A549 (cell line): ENCODE measurements at regions of chr9 and their contacts with region 1.

Region 1: GRCh38 chr9:129783516-129784361 is 19.2 kb upstream of the TOR1B start:
- DNase-seq: peak; percentile 78 to 92
- ATAC-seq: peak; percentile 95 to 98
- H3K4me3 ChIP-seq: no peak overlapping the region
- H3K27ac ChIP-seq: peak overlapping the region; percentile 51 to 73
- H3K4me1 ChIP-seq: peaks cover 9% of the 10 kb centered on the region; the same call in 1 of the 3 replicates
- CTCF ChIP-seq: peak; percentile 95
- EP300 ChIP-seq: no peak
- POLR2A ChIP-seq: no peak
- RAD21 ChIP-seq: peak; percentile 98 to 99

Region 2: DNA sequence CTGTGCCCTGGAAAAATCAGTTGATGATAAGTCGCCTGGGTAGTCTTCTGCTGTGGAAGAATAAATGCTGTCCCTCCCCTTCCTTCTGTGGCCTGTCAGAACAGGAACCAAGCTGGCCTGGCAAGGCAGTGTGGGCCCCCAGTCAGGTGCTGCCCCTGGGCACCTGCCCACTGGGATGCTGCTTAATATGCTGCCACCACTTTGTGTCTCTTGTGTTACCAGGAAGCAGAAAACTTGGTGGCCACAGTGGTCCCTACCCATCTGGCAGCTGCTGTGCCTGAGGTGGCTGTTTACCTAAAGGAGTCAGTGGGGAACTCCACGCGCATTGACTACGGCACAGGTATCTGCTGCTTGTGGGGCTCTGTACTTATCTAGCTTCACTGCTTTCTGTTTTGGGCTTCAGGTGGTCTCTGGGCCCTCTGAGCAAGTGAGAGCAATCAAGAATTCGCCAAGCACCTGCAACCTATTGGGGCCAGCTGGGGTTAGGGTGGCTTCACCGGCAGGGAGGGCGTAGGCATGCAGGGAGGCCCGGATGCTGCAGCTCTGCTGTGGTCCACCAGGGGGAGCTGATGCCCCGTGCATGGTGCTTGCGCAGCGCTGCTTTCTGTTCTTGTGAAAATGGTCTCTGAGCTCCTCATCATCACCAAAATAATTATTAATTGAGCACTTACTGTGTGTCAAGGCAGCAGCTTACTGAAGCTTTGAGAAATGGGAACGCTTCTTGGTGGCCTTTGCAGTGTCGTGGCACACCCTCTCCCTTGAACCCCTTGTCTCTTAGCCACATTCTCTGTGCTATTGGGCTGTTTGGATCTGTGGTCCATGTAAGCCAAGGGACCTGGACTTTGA is 652.2 kb before region 1 on chr9:
- CTCF ChIA-PET with region 1: interaction called, 11 read pairs
- POLR2A ChIA-PET with region 1: no interaction called
- DNase-seq: peak; percentile 72 to 93
- ATAC-seq: peak; percentile 93 to 96
- H3K4me3 ChIP-seq: no peak overlapping the region
- H3K27ac ChIP-seq: peak overlapping the region; percentile 30 to 63; a peak in 4 of 6 replicates
- H3K4me1 ChIP-seq: peaks cover 7% of the 10 kb centered on the region; the same call in 1 of the 3 replicates
- CTCF ChIP-seq: peak; percentile 94
- EP300 ChIP-seq: no peak
- POLR2A ChIP-seq: no peak
- RAD21 ChIP-seq: peak; percentile 93 to 95

Region 3: DNA sequence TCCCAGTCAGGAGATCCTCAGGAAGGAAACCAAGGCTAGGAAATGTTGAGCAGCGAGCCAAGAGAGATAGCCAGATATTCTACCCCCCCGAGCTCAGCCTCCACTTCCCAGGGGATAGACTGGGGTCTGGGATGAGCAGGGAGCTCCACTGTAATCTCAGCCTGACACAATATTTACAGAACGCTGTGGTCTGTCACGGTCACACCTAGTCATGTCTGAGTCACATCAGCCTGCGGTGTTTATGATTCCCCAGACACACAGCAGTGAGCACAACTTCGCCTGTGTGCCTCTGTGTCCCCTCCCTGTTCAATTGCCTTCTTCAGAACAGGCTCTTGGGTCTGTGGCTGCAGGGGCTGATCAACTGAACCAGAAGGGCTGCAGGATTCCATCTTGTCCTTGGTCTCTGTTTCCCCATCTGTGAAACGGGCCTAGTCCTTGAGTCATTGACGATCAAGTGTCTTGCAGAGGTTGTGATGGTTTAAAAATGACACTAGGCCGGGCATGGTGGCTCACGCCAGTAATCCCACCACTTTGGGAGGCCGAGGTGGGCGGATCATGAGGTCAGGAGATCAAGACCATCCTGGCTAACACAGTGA is 126.8 kb before region 1 on chr9:
- CTCF ChIA-PET with region 1: interaction called, 12 read pairs
- POLR2A ChIA-PET with region 1: no interaction called
- DNase-seq: peak; percentile 57 to 83
- ATAC-seq: peak; percentile 89 to 92
- H3K4me3 ChIP-seq: no peak overlapping the region
- H3K27ac ChIP-seq: peak overlapping the region; percentile 40 to 47; a peak in 3 of 6 replicates
- H3K4me1 ChIP-seq: peaks cover 17% of the 10 kb centered on the region
- CTCF ChIP-seq: no peak
- EP300 ChIP-seq: no peak
- POLR2A ChIP-seq: no peak
- RAD21 ChIP-seq: no peak

Region 4: GRCh38 chr9:129667850-129668249 is 115.9 kb before region 1 on chr9:
- CTCF ChIA-PET with region 1: no interaction called
- POLR2A ChIA-PET with region 1: no interaction called
- DNase-seq: no peak
- ATAC-seq: peak in 1 of 2 experiments; percentile 29; a peak in 3 of 6 replicates
- H3K4me3 ChIP-seq: no peak overlapping the region
- H3K27ac ChIP-seq: no peak overlapping the region
- H3K4me1 ChIP-seq: peaks cover 18% of the 10 kb centered on the region; the same call in 1 of the 3 replicates
- CTCF ChIP-seq: no peak
- EP300 ChIP-seq: no peak
- POLR2A ChIP-seq: no peak
- RAD21 ChIP-seq: no peak

Region 5: GRCh38 chr9:129696938-129697650 is 86.6 kb before region 1 on chr9:
- CTCF ChIA-PET with region 1: interaction called, 15 read pairs
- POLR2A ChIA-PET with region 1: interaction called, 4 read pairs
- DNase-seq: peak; percentile 44 to 60
- ATAC-seq: peak; percentile 76 to 85
- H3K4me3 ChIP-seq: peak overlapping the region; percentile 64
- H3K27ac ChIP-seq: peak overlapping the region; percentile 97
- H3K4me1 ChIP-seq: peaks cover 13% of the 10 kb centered on the region
- CTCF ChIP-seq: no peak
- EP300 ChIP-seq: no peak
- POLR2A ChIP-seq: peak; percentile 43
- RAD21 ChIP-seq: no peak

Region 6: GRCh38 chr9:129752915-129753729 is 30.6 kb before region 1 on chr9 and contains the start of gene PTGES:
- CTCF ChIA-PET with region 1: interaction called, 51 read pairs
- POLR2A ChIA-PET with region 1: no interaction called
- DNase-seq: peak; percentile 79 to 91
- ATAC-seq: peak; percentile 93 to 97
- H3K4me3 ChIP-seq: peak within 1 kb of the TSS; percentile 51
- H3K27ac ChIP-seq: peak within 1 kb of the TSS; percentile 64 to 78
- H3K4me1 ChIP-seq: peaks cover 47% of the 10 kb centered on the region
- CTCF ChIP-seq: no peak
- EP300 ChIP-seq: no peak
- POLR2A ChIP-seq: peak; percentile 51
- RAD21 ChIP-seq: no peak
- polyA plus RNA-seq, gene PTGES: 19.1 and 22.1 TPM in 2 replicates

Region 7: DNA sequence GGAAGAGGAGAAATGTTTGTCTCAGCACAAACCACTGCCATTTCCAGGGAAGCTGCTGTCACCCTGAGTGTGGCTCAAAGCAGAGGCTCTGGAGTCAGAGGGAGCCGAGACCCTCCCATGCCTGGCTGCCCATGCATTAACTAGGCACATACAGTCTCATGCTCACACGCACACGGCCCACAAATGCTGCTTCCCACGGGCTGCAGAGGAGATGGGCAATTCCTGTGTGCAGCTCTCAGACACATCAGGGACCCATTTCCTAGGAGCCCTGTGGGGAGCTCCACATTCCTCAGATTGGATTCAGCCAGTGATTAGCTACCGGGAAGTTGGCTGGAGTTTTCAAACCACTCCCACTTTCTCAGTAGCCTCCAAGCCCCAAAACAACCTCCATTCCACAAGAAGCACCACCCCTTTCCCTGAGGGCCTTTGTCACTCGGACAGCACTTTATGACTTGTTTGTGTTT is 21.8 kb before region 1 on chr9:
- CTCF ChIA-PET with region 1: interaction called, 76 read pairs
- POLR2A ChIA-PET with region 1: no interaction called
- DNase-seq: peak in 1 of 2 experiments; percentile 85
- ATAC-seq: peak; percentile 81 to 87
- H3K4me3 ChIP-seq: no peak overlapping the region
- H3K27ac ChIP-seq: peak overlapping the region; percentile 59 to 91
- H3K4me1 ChIP-seq: peaks cover 25% of the 10 kb centered on the region
- CTCF ChIP-seq: no peak
- EP300 ChIP-seq: no peak
- POLR2A ChIP-seq: no peak
- RAD21 ChIP-seq: no peak

Region 8: GRCh38 chr9:129796029-129796910 is 12.5 kb after region 1 on chr9:
- CTCF ChIA-PET with region 1: interaction called, 20 read pairs
- POLR2A ChIA-PET with region 1: no interaction called
- DNase-seq: no peak
- ATAC-seq: peak in 1 of 2 experiments; percentile 16; a peak in 2 of 6 replicates
- H3K4me3 ChIP-seq: no peak overlapping the region
- H3K27ac ChIP-seq: no peak overlapping the region
- H3K4me1 ChIP-seq: peaks cover 3% of the 10 kb centered on the region; the same call in 1 of the 3 replicates
- CTCF ChIP-seq: no peak
- EP300 ChIP-seq: no peak
- POLR2A ChIP-seq: no peak
- RAD21 ChIP-seq: no peak

Region 9: DNA sequence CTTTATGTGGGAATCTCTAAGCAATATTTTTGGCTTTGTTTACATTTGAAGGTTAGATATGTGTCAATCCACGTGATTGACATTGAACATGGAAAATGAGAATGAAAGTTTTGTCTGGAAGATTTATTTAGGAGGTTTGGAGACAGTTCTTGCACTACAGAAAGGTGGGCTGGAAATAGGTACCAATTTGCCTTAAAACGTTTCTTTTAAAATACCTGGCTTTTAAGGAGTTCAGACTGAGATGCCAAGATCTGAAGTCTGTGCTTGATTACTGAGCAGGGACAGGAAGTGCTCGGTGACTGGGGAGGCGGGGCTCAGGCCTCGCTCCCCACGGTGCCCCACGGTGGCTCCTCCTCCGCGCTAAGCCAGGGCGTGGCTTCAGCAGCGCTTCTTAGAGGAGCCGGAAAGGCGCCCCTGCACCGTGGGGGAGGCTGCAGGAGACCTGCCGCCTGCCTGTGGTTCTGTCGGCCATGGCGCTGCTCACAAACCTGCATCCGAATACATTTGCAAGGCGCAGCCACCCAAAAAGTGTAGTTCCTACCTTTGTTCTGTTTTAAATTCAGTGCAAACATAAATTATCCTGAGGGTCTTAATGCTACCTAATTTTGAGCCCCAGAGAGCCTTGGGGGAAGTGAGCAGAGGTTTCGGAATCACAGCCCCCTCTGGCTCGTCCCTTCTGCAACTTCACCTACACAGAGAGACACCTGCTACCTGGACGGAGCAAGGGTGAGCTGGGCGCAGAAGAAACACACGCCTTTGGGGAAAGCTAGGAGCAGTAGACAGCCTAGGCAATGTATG is 100.7 kb after region 1 on chr9:
- CTCF ChIA-PET with region 1: no interaction called
- POLR2A ChIA-PET with region 1: no interaction called
- DNase-seq: peak; percentile 76 to 83
- ATAC-seq: peak; percentile 86 to 92
- H3K4me3 ChIP-seq: peak overlapping the region; percentile 20; the same call in 2 of the 3 replicates
- H3K27ac ChIP-seq: peak overlapping the region; percentile 50 to 87
- H3K4me1 ChIP-seq: peaks cover 24% of the 10 kb centered on the region
- CTCF ChIP-seq: no peak
- EP300 ChIP-seq: no peak
- POLR2A ChIP-seq: peak; percentile 71
- RAD21 ChIP-seq: no peak

Region 10: DNA sequence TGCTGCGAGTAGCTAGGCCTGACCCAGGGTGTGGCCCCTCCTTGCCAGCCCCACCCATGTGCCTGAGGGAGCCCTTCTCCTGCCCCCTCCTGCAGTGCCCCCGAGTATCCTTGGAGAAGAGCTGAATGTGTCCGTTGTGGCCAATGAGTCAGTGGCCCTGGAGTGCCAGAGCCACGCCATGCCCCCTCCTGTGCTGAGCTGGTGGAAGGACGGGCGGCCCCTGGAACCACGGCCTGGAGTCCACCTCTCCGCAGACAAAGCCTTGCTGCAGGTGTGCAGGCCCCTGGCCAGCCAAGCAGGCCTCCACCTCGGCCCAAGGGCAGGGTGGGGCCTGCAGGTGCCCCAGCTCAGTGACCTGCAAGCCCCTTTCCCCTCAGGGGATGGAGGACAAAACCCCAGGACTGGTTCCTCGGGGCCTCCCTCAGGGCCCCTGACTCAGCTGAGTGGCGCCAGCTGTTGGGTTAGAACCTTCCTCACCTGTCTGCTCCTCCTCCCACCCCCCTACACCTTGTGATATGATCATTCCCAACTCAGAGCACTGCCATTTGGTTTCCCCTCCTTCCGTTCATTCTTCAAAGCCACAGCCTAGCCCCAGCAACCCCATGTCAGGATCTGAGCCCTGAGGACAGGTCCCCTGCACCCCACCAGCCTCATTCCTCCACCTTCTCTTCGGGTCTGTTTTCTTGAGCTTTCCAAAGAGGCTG is 581.0 kb after region 1 on chr9:
- CTCF ChIA-PET with region 1: no interaction called
- POLR2A ChIA-PET with region 1: no interaction called
- DNase-seq: no peak
- ATAC-seq: peak in 1 of 2 experiments; percentile 32; a peak in 2 of 6 replicates
- H3K4me3 ChIP-seq: no peak overlapping the region
- H3K27ac ChIP-seq: no peak overlapping the region
- H3K4me1 ChIP-seq: no peaks in the 10 kb centered on the region
- CTCF ChIP-seq: no peak
- EP300 ChIP-seq: no peak
- POLR2A ChIP-seq: no peak
- RAD21 ChIP-seq: no peak